ENCODE measurements at regions of chr3 and their contacts with region 1.

Region 1: GRCh38 chr3:32374788-32375595 is 16.7 kb upstream of the CMTM7 start:
- DNase-seq: peak in 8 of 9 donors; percentile 50 to 83 (median 77)
- ATAC-seq: peak; percentile 67
- H3K4me3 ChIP-seq: no peak overlapping the region
- H3K4me3 Mint-ChIP-seq: peak overlapping the region in 1 of 10 donors; percentile 37
- H3K27ac ChIP-seq: no peak overlapping the region
- H3K27ac Mint-ChIP-seq: peak overlapping the region; percentile 54 to 97 (median 87)
- H3K4me1 ChIP-seq: peaks cover 0 to 34% of the 10 kb centered on the region in 2 donors
- H3K4me1 Mint-ChIP-seq: peaks cover 15 to 49% (median 38%) of the 10 kb centered on the region in 7 donors
- H3K27me3 ChIP-seq: no peaks in the 10 kb centered on the region
- H3K27me3 Mint-ChIP-seq: peaks cover 0 to 4% (median 0%) of the 10 kb centered on the region in 5 donors

Region 2: GRCh38 chr3:32216172-32216783 is 158.7 kb before region 1 on chr3:
- CTCF ChIA-PET with region 1: no interaction called
- POLR2A ChIA-PET with region 1: no interaction called
- intact Hi-C with region 1: no loop called
- DNase-seq: no peak
- ATAC-seq: no peak
- H3K4me3 ChIP-seq: no peak overlapping the region
- H3K4me3 Mint-ChIP-seq: no peak overlapping the region
- H3K27ac ChIP-seq: no peak overlapping the region
- H3K27ac Mint-ChIP-seq: no peak overlapping the region
- H3K4me1 ChIP-seq: no peaks in the 10 kb centered on the region
- H3K4me1 Mint-ChIP-seq: no peaks in the 10 kb centered on the region
- H3K27me3 ChIP-seq: no peaks in the 10 kb centered on the region
- H3K27me3 Mint-ChIP-seq: peaks cover 0 to 19% (median 5%) of the 10 kb centered on the region in 5 donors

Region 3: GRCh38 chr3:32296256-32297204 is 78.5 kb before region 1 on chr3:
- CTCF ChIA-PET with region 1: interaction called, 6 read pairs
- POLR2A ChIA-PET with region 1: interaction called, 15 read pairs
- intact Hi-C with region 1: loop called (anchors 1 to 2 kb)
- DNase-seq: peak; percentile 35 to 73 (median 62)
- ATAC-seq: peak; percentile 89
- H3K4me3 ChIP-seq: no peak overlapping the region
- H3K4me3 Mint-ChIP-seq: peak overlapping the region; percentile 60 to 80 (median 72)
- H3K27ac ChIP-seq: peak overlapping the region; percentile 53
- H3K27ac Mint-ChIP-seq: peak overlapping the region; percentile 89 to 99 (median 95)
- H3K4me1 ChIP-seq: peaks cover 15 to 18% of the 10 kb centered on the region in 2 donors
- H3K4me1 Mint-ChIP-seq: peaks cover 21 to 65% (median 39%) of the 10 kb centered on the region in 7 donors
- H3K27me3 ChIP-seq: no peaks in the 10 kb centered on the region
- H3K27me3 Mint-ChIP-seq: no peaks in the 10 kb centered on the region

Region 4: DNA sequence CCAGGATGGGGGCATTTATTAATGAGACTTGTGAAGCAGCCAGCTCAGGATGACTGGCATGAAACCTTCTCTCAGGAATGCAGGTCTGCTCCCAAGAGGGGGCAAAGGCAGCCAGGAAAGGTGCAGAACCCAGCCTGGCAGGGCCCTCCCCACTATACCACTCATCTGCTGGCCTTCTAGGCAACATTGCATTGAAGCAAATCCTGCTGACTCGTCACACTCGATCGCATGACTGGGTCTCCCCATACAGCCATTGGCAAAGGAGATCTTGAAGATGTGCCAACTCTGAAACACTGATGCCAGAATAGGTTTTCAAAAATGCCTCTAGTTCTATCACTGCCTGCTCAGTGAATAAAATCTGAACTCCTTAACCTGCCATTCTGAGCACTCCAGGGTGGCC is 49.0 kb before region 1 on chr3:
- CTCF ChIA-PET with region 1: no interaction called
- POLR2A ChIA-PET with region 1: no interaction called
- intact Hi-C with region 1: no loop called
- DNase-seq: no peak
- ATAC-seq: no peak
- H3K4me3 ChIP-seq: no peak overlapping the region
- H3K4me3 Mint-ChIP-seq: no peak overlapping the region
- H3K27ac ChIP-seq: no peak overlapping the region
- H3K27ac Mint-ChIP-seq: no peak overlapping the region
- H3K4me1 ChIP-seq: no peaks in the 10 kb centered on the region
- H3K4me1 Mint-ChIP-seq: peaks cover 7 to 39% (median 17%) of the 10 kb centered on the region in 7 donors
- H3K27me3 ChIP-seq: no peaks in the 10 kb centered on the region
- H3K27me3 Mint-ChIP-seq: no peaks in the 10 kb centered on the region

Region 5: DNA sequence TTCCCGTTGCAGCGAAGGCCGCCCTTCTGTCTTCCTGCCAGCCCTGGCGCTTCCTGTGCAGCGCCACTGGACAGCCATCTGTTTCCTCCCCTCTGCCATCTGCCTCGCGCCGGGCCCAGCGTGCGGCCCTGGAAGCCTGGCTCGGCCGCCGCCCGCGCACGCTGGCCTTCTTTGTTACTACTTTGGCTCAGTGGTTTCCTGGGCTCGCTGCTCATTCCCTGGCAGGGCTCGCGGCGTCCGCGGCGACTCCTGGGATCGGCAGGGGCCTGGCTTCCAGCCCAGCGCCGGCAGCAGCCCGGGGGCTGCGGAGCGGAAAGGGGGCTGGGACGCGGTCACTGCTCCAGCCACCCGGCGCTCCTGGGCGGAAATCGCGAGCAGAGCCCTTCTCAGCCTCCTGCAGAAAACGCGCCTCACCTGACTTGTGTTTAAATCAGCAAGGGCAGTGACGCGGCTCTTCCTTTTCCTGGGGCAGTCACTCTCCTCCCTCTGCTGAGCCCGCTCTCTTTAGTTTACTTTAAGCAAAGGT is 26.6 kb after region 1 on chr3:
- CTCF ChIA-PET with region 1: interaction called, 56 read pairs
- POLR2A ChIA-PET with region 1: interaction called, 16 read pairs
- intact Hi-C with region 1: loop called (anchors 1 kb)
- DNase-seq: peak in 8 of 9 donors; percentile 45 to 71 (median 64)
- ATAC-seq: peak; percentile 76
- H3K4me3 ChIP-seq: peak overlapping the region; percentile 63
- H3K4me3 Mint-ChIP-seq: peak overlapping the region; percentile 83 to 96 (median 92)
- H3K27ac ChIP-seq: peak overlapping the region; percentile 87
- H3K27ac Mint-ChIP-seq: peak overlapping the region; percentile 92 to 100 (median 99)
- H3K4me1 ChIP-seq: peaks cover 30 to 44% of the 10 kb centered on the region in 2 donors
- H3K4me1 Mint-ChIP-seq: peaks cover 46 to 95% (median 78%) of the 10 kb centered on the region in 7 donors
- H3K27me3 ChIP-seq: no peaks in the 10 kb centered on the region
- H3K27me3 Mint-ChIP-seq: no peaks in the 10 kb centered on the region

Region 6: DNA sequence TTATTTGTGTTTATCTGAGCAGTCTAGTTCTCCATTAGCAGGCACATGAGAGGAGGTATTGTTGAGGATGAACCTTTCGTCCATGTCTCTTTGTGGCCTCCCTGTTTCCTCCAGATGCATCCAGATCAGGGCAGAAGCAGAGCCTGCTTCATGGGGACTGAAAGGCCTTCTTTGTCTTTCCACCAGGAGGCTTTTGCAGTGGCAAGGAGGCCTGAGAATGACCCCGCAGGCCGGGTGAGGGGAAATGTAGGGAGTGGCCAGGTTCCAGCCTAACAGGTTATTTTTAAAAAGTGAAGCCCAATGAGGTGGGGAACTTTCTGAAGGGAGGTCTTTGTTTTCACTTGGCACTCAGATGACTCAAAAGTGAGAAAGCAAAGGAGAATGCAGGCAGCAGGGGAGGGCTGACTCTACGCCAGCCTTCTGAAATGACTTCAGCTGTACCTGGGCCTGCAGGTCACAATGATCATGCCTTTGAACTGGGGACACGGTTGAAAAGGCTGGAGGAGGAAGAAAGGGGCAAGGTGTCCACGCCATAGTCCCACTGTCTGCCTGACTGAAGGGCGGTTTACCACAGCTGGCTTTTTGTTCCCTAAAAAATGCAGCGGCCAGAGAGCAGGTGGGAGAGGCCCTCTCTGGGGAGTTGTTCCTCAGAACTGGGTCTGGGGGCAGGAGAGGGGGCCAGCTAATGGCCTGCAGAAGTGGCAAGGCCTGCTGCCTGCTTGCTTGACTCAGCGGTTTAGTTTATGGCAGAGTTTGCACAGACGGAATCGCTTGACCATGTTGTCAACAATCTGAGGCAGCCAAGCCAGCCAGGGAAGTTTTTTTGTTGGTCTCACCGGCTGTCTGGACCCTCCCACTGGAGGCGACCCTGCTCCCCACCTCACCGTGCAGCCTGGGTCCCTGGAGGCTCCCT is 45.4 kb after region 1 on chr3:
- CTCF ChIA-PET with region 1: interaction called, 15 read pairs
- POLR2A ChIA-PET with region 1: interaction called, 15 read pairs
- intact Hi-C with region 1: no loop called
- DNase-seq: peak in 1 of 9 donors; percentile 37
- ATAC-seq: peak; percentile 39
- H3K4me3 ChIP-seq: no peak overlapping the region
- H3K4me3 Mint-ChIP-seq: peak overlapping the region; percentile 58 to 84 (median 76)
- H3K27ac ChIP-seq: peak overlapping the region; percentile 68
- H3K27ac Mint-ChIP-seq: peak overlapping the region; percentile 76 to 99 (median 94)
- H3K4me1 ChIP-seq: peaks cover 30 to 91% of the 10 kb centered on the region in 2 donors
- H3K4me1 Mint-ChIP-seq: peaks cover 69 to 100% (median 97%) of the 10 kb centered on the region in 7 donors
- H3K27me3 ChIP-seq: no peaks in the 10 kb centered on the region
- H3K27me3 Mint-ChIP-seq: no peaks in the 10 kb centered on the region

Region 7: GRCh38 chr3:32467333-32468070 is 92.5 kb after region 1 on chr3:
- CTCF ChIA-PET with region 1: interaction called, 89 read pairs
- POLR2A ChIA-PET with region 1: interaction called, 12 read pairs
- intact Hi-C with region 1: loop called (anchors 1 kb)
- DNase-seq: peak; percentile 59 to 89 (median 78)
- ATAC-seq: peak; percentile 94
- H3K4me3 ChIP-seq: peak overlapping the region; percentile 66
- H3K4me3 Mint-ChIP-seq: peak overlapping the region; percentile 39 to 81 (median 68)
- H3K27ac ChIP-seq: peak overlapping the region; percentile 81
- H3K27ac Mint-ChIP-seq: peak overlapping the region in 7 of 9 donors; percentile 25 to 93 (median 85)
- H3K4me1 ChIP-seq: peaks cover 14 to 25% of the 10 kb centered on the region in 2 donors
- H3K4me1 Mint-ChIP-seq: peaks cover 19 to 62% (median 49%) of the 10 kb centered on the region in 7 donors
- H3K27me3 ChIP-seq: no peaks in the 10 kb centered on the region
- H3K27me3 Mint-ChIP-seq: no peaks in the 10 kb centered on the region

Measured in naive thymus-derived CD4-positive, alpha-beta T cell (primary cell).